GM12878 (cell line): ENCODE measurements at regions of chr5 and their contacts with region 1.

Region 1: GRCh38 chr5:178461004-178461730 is 129.0 kb downstream of the COL23A1 start:
- DNase-seq: no peak
- ATAC-seq: peak; percentile 91
- H3K4me3 ChIP-seq: no peak overlapping the region
- H3K27ac ChIP-seq: no peak overlapping the region
- H3K4me1 ChIP-seq: no peaks in the 10 kb centered on the region
- H3K27me3 ChIP-seq: no peaks in the 10 kb centered on the region
- CTCF ChIP-seq: peak; percentile 55 to 75 (median 60)
- EP300 ChIP-seq: no peak
- POLR2A ChIP-seq: no peak
- RAD21 ChIP-seq: no peak; the same call in 1 of the 2 replicates

Region 2: DNA sequence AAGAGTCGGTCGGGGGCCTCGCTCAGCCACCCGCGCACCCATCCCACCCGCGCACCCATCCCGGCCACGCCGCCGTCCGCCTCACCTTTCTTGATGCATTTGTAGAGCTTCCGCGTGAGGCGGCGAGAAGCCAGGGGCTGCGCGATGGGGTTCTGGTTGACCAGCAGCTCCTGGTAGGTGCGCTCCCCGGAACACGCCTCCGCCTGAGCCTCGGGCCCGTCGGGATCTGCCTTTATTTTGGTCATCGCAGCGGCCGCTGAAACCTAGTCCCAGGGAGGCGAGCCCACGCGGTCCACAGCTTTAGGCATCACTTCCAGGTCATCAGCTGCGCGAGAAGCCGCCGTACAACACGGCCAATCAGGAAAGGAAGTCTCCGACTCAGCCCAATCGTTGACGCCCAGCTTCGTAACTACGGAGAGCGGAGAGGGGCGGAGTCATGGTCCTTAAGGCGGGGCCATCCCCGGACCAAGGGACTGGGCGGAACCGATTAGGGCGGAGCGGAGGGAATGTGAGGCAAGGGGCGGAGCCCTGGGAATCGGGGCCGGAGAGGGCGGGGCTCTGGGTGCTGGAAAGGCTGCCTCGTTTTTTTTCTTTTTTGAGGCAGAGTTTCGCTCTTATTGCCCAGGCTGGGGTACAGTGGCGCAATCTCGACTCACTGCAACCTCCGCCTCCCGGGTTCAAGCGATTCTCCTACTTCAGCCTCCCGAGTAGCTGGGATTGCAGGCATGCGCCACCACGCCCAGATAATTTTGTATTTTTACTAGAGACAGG is 307.4 kb before region 1 on chr5 and contains the start of gene NHP2:
- CTCF ChIA-PET with region 1: no interaction called
- POLR2A ChIA-PET with region 1: no interaction called
- RAD21 ChIA-PET with region 1: no interaction called
- SMC1A ChIA-PET with region 1: no interaction called
- in situ Hi-C with region 1: no loop called
- intact Hi-C with region 1: no loop called
- DNase-seq: peak; percentile 92
- ATAC-seq: peak; percentile 99
- H3K4me3 ChIP-seq: peak within 1 kb of the TSS; percentile 89
- H3K27ac ChIP-seq: peak within 1 kb of the TSS; percentile 67
- H3K4me1 ChIP-seq: peaks cover 7% of the 10 kb centered on the region; the same call in 1 of the 2 replicates
- H3K27me3 ChIP-seq: no peaks in the 10 kb centered on the region
- CTCF ChIP-seq: no peak
- EP300 ChIP-seq: no peak
- POLR2A ChIP-seq: peak; percentile 81
- RAD21 ChIP-seq: no peak
- polyA plus RNA-seq, gene NHP2: 39.2 to 127 TPM

Region 3: DNA sequence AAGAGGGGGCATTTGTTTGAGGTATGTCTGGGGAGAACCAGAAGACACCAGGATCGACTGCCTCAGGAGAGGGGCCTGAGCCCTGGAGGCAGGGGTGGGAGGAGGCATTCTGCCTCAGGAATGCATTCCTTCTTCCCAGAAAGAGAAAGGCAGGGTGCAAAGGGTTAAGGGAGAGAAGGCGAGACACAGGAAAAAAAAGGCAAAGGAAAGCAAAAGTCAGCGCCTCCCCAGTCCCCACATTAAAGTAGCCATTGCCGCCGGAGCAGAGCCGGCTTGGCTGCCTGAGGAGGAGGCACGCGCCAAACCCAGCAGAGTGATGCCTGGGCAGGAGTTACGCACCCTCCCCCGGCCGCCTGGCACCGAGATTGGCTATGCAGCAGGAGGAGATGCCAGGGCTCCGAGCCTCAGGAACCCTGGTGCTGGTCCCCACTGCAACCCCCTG is 104.7 kb before region 1 on chr5:
- CTCF ChIA-PET with region 1: no interaction called
- POLR2A ChIA-PET with region 1: no interaction called
- RAD21 ChIA-PET with region 1: no interaction called
- SMC1A ChIA-PET with region 1: no interaction called
- in situ Hi-C with region 1: no loop called
- intact Hi-C with region 1: no loop called
- DNase-seq: no peak
- ATAC-seq: no peak
- H3K4me3 ChIP-seq: no peak overlapping the region
- H3K27ac ChIP-seq: no peak overlapping the region
- H3K4me1 ChIP-seq: no peaks in the 10 kb centered on the region
- H3K27me3 ChIP-seq: no peaks in the 10 kb centered on the region
- CTCF ChIP-seq: no peak
- EP300 ChIP-seq: no peak
- POLR2A ChIP-seq: no peak
- RAD21 ChIP-seq: no peak

Region 4: DNA sequence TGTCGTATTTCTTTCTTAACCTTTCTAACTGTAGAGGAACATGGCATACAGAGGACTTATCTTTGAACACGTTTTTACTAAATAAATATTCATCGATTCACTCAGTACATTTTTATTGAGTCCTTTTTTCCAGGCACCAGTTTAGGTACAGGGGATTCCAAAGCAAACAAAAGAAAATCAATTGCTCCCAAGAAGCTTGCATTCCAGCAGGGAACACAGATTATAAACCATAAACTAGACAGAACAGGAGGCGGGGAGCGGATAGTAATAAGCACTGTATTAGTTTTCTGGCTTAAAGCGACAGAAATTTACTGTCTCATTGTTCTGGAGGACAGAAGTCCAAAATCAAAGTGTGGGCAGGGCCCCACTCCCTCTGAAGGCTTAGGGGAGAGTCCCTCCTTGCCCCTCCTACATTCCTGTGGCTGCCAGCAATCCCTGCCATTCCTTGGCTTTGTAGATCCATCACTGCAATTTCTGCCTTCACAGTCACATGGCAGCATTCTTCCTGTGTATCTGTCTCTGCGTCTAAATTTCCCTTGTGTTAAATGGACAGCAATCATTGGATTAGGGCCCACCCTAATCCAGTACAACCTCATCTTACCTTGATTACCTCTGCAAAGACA is 13.5 kb after region 1 on chr5:
- CTCF ChIA-PET with region 1: interaction called, 20 read pairs
- POLR2A ChIA-PET with region 1: no interaction called
- RAD21 ChIA-PET with region 1: no interaction called
- SMC1A ChIA-PET with region 1: no interaction called
- in situ Hi-C with region 1: no loop called
- intact Hi-C with region 1: no loop called
- DNase-seq: no peak
- ATAC-seq: no peak
- H3K4me3 ChIP-seq: no peak overlapping the region
- H3K27ac ChIP-seq: no peak overlapping the region
- H3K4me1 ChIP-seq: no peaks in the 10 kb centered on the region
- H3K27me3 ChIP-seq: no peaks in the 10 kb centered on the region
- CTCF ChIP-seq: no peak
- EP300 ChIP-seq: no peak
- POLR2A ChIP-seq: no peak
- RAD21 ChIP-seq: no peak

Region 5: DNA sequence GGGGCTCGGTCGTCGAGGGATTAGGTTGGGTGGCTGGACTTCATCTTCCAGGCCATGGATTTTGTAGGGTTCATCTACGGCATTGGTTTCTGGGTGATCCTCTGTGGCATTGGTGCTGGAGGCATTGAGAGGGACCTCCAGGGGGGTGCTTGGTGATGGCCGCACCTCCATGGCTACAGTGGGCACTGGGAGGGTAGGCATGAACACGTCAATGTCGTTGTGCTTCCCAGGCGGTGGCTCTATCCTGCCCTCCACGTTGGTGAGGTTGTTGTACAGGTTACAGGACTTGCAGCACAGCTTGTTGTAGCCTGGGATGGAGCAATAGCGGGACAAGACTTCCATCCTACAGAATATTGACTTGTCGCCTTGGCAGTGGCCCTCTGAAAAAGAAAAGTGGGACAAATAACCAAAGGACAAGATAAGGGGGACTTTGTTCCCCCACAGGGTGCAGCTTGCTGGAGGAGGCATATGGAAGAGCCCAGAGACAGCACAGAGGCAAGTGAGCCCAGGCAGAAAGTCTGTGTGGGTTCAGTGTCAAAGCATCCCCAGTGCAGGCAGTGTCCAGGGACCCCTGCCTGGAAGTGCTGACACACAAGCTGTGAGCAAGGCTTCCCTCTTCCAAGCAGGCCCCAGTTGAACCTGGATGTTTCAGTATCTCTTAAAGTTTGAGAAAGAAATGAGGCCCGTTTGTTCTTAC is 652.9 kb after region 1 on chr5:
- CTCF ChIA-PET with region 1: no interaction called
- POLR2A ChIA-PET with region 1: no interaction called
- RAD21 ChIA-PET with region 1: no interaction called
- SMC1A ChIA-PET with region 1: no interaction called
- in situ Hi-C with region 1: no loop called
- intact Hi-C with region 1: no loop called
- DNase-seq: no peak
- ATAC-seq: no peak
- H3K4me3 ChIP-seq: no peak overlapping the region
- H3K27ac ChIP-seq: no peak overlapping the region
- H3K4me1 ChIP-seq: no peaks in the 10 kb centered on the region
- H3K27me3 ChIP-seq: no peaks in the 10 kb centered on the region
- CTCF ChIP-seq: no peak
- EP300 ChIP-seq: no peak
- POLR2A ChIP-seq: no peak
- RAD21 ChIP-seq: no peak